Heart left ventricle (tissue), 16 donors: ENCODE measurements at regions of chr1 and their contacts with region 1.

Region 1: DNA sequence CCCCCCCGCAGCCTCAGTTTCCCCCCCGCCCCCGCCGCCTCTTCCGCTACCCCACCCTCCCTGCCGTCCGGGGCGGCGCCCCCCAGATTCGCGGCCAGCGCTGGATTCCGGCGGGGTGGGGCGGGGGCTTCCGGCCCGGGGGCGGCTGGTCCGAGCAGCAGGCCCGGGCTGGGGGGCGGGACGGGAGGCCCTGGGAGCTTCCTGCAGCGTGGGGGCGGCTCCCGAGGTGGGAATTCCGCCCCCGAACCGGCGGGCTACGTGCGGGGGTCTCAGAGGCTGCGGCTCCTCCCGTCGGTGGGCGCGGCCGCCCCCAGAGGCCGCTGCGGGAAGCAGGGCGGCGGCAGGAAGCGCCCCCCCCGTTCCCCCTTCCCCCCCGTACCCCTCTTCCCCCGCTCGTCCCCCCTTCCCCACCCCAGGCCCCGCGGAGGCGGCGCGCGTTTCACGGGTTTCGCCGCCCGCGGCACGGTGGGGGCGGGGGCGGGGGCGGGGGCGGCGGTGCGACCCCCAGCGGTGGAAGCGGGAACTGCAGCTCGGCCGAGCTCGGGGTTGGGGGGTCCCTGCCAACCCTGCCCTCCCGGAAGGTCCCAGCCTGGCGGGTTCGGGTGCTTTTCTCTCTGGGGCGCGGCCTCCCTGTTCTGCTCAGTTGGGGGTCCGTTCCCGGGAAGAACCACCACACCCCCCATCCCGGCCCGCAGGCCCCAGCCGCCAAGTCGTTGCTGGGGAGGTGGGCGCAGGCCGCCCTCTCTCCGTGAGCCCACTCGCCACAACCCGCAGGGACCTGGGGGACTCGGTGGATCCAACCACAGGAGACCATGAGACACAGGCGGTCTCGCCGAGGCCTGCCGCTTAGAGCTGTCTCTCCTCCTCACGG is 76.3 kb downstream of the MORN1 start:
- DNase-seq: peak; percentile 73 to 87 (median 81)
- ATAC-seq: peak in 3 of 4 donors; percentile 17 to 25 (median 25)
- H3K4me3 ChIP-seq: peak overlapping the region; percentile 34 to 90 (median 71)
- H3K27ac ChIP-seq: peak overlapping the region; percentile 71 to 95 (median 88)
- H3K4me1 ChIP-seq: peaks cover 0 to 88% (median 55%) of the 10 kb centered on the region in 12 donors
- H3K27me3 ChIP-seq: no peaks in the 10 kb centered on the region
- CTCF ChIP-seq: peak; percentile 86 to 100 (median 98)
- POLR2A ChIP-seq: no peak

Region 2: GRCh38 chr1:2205191-2205952 is 109.7 kb before region 1 on chr1:
- intact Hi-C with region 1: loop called in 2 of 10 experiments (anchors 2 to 5 kb)
- DNase-seq: peak; percentile 98 to 99 (median 98)
- ATAC-seq: peak; percentile 72 to 85 (median 80)
- H3K4me3 ChIP-seq: peak overlapping the region in 11 of 12 donors; percentile 23 to 64 (median 52)
- H3K27ac ChIP-seq: peak overlapping the region; percentile 48 to 96 (median 88)
- H3K4me1 ChIP-seq: peaks cover 10 to 68% (median 51%) of the 10 kb centered on the region in 12 donors
- H3K27me3 ChIP-seq: no peaks in the 10 kb centered on the region
- CTCF ChIP-seq: peak in 5 of 12 donors; percentile 7 to 32 (median 9)
- POLR2A ChIP-seq: peak in 1 of 2 donors; percentile 51

Region 3: GRCh38 chr1:2227346-2228153 is 87.5 kb before region 1 on chr1:
- intact Hi-C with region 1: loop called in 7 of 10 experiments (anchors 2 to 10 kb)
- DNase-seq: peak; percentile 96 to 99 (median 97)
- ATAC-seq: peak; percentile 83 to 93 (median 86)
- H3K4me3 ChIP-seq: peak overlapping the region; percentile 58 to 96 (median 85)
- H3K27ac ChIP-seq: peak overlapping the region; percentile 98 to 100 (median 100)
- H3K4me1 ChIP-seq: peaks cover 0 to 52% (median 31%) of the 10 kb centered on the region in 12 donors
- H3K27me3 ChIP-seq: no peaks in the 10 kb centered on the region
- CTCF ChIP-seq: peak in 1 of 12 donors; percentile 14
- POLR2A ChIP-seq: peak; percentile 19 to 86

Region 4: DNA sequence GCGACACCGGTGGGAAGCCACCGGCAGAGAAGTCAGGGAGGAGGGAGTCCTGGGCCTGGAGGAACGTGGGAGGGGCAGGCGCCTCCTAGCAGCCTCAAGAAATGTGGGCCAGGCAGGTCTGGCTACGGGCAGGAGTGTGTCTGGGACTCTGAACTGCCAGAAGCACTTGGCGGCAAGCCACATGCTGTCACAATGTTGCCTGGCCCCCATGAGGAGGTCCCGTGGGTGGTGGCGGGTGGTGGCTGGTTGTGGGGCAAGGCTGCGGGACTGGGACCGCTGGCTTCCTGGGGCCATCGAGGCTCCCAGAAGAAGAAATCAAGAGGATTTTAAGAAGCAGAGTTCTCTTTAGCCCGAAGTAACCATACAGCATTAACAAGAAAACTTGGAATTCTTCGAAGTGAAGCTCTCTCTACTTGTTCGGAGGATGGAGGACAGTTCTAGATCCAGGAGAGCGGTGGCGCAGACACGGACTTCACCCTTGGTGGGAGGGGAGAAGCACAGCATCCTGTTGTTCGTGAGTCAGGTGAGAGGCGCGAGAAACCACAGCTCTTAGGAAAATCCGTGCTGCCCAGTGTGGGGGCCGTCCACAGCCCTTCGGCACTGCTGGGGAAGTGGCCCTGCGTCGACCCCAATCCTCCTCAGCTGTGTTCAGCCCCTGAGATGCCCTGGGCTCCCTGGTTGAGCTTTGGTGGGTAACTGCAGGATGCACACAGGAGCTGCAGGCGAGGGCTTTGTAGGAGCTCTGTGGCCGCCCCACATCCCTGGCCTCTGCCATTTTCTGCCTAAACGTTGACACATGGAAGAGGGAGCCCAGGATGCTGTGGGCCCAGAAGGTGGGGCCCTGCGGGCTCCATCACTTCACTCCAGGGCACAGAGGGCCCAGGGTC is 74.5 kb before region 1 on chr1:
- intact Hi-C with region 1: loop called in 3 of 10 experiments (anchors 5 to 10 kb)
- DNase-seq: peak; percentile 76 to 90 (median 87)
- ATAC-seq: peak; percentile 39 to 77 (median 61)
- H3K4me3 ChIP-seq: peak overlapping the region in 5 of 12 donors; percentile 1 to 36 (median 7)
- H3K27ac ChIP-seq: peak overlapping the region in 9 of 12 donors; percentile 7 to 89 (median 38)
- H3K4me1 ChIP-seq: peaks cover 11 to 95% (median 90%) of the 10 kb centered on the region in 12 donors
- H3K27me3 ChIP-seq: no peaks in the 10 kb centered on the region
- CTCF ChIP-seq: no peak
- POLR2A ChIP-seq: no peak

Region 5: GRCh38 chr1:2381741-2382620 is 66.9 kb after region 1 on chr1:
- intact Hi-C with region 1: loop called in 6 of 10 experiments (anchors 5 kb)
- DNase-seq: peak; percentile 85 to 93 (median 88)
- ATAC-seq: peak; percentile 92 to 97 (median 95)
- H3K4me3 ChIP-seq: no peak overlapping the region
- H3K27ac ChIP-seq: peak overlapping the region in 1 of 12 donors; percentile 40
- H3K4me1 ChIP-seq: peaks cover 0 to 15% (median 8%) of the 10 kb centered on the region in 12 donors
- H3K27me3 ChIP-seq: no peaks in the 10 kb centered on the region
- CTCF ChIP-seq: peak; percentile 90 to 96 (median 94)
- POLR2A ChIP-seq: no peak